OCI-LY7 (cell line): ENCODE measurements at regions of chr6 and their contacts with region 1.

Region 1: DNA sequence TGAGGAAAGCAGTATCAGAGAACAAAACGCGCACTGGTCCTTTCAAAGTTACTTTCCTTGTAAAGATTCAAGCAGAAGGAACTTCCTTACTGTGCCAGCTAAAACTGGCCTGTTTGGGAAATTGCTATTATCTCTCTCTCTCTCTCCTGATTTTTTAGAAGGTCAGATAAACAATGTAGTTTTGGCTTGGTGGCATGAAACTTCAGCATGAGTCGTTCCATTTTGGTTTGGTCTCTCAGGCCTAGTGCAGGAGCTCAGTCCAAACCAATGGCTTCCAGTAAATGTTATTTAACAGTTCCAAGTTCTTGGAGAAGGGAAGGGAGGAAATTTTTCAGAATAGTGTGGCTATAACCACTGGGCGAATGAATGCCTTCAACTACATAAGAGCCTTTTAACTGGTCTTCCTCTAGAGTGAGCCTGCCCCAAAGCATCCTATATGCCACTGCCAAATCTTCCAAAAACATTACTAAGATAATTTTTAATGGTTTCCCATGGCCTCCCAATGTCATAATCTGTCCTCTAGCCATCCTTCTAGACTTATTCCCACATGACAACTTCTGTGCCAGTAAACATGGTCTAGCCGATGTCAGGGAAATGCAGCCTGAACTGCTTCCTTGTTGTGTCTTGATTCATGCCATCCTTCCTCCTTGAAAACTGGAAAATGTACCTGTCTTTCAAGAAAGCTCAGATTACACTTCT is 9.1 kb upstream of the SNX9 start:
- DNase-seq: no peak
- H3K4me3 ChIP-seq: no peak overlapping the region
- H3K27ac ChIP-seq: peak overlapping the region; percentile 77
- H3K4me1 ChIP-seq: peaks cover 41% of the 10 kb centered on the region
- CTCF ChIP-seq: no peak

Region 2: GRCh38 chr6:157764178-157765033 is 49.5 kb before region 1 on chr6:
- CTCF ChIA-PET with region 1: no interaction called
- POLR2A ChIA-PET with region 1: interaction called, 6 read pairs
- intact Hi-C with region 1: loop called (anchors 5 kb)
- DNase-seq: peak; percentile 84
- H3K4me3 ChIP-seq: peak overlapping the region; percentile 53
- H3K27ac ChIP-seq: peak overlapping the region; percentile 50
- H3K4me1 ChIP-seq: peaks cover 58% of the 10 kb centered on the region
- CTCF ChIP-seq: no peak